ENCODE measurements at regions of chr2 and their contacts with region 1.

Region 1: GRCh38 chr2:96336104-96336775 is 674 bp downstream of the NCAPH start:
- DNase-seq: no peak
- H3K4me3 Mint-ChIP-seq: peak overlapping the region; percentile 81
- H3K27ac Mint-ChIP-seq: peak overlapping the region; percentile 73
- H3K4me1 Mint-ChIP-seq: peaks cover 66% of the 10 kb centered on the region
- H3K27me3 Mint-ChIP-seq: no peaks in the 10 kb centered on the region

Region 2: GRCh38 chr2:96180521-96180920 is 155.7 kb before region 1 on chr2:
- CTCF ChIA-PET with region 1: no interaction called
- POLR2A ChIA-PET with region 1: no interaction called
- DNase-seq: no peak
- H3K4me3 Mint-ChIP-seq: no peak overlapping the region
- H3K27ac Mint-ChIP-seq: no peak overlapping the region
- H3K4me1 Mint-ChIP-seq: peaks cover 7% of the 10 kb centered on the region
- H3K27me3 Mint-ChIP-seq: peaks cover 4% of the 10 kb centered on the region

Region 3: GRCh38 chr2:96315400-96316071 is 20.7 kb before region 1 on chr2:
- CTCF ChIA-PET with region 1: interaction called, 7 read pairs
- POLR2A ChIA-PET with region 1: interaction called, 422 read pairs
- DNase-seq: peak; percentile 61
- H3K4me3 Mint-ChIP-seq: peak overlapping the region; percentile 61
- H3K27ac Mint-ChIP-seq: peak overlapping the region; percentile 93
- H3K4me1 Mint-ChIP-seq: peaks cover 63% of the 10 kb centered on the region
- H3K27me3 Mint-ChIP-seq: no peaks in the 10 kb centered on the region

Region 4: GRCh38 chr2:96320728-96321622 is 15.3 kb before region 1 on chr2:
- CTCF ChIA-PET with region 1: interaction called, 28 read pairs
- POLR2A ChIA-PET with region 1: interaction called, 422 read pairs
- DNase-seq: peak; percentile 46
- H3K4me3 Mint-ChIP-seq: peak overlapping the region; percentile 80
- H3K27ac Mint-ChIP-seq: peak overlapping the region; percentile 84
- H3K4me1 Mint-ChIP-seq: peaks cover 70% of the 10 kb centered on the region
- H3K27me3 Mint-ChIP-seq: no peaks in the 10 kb centered on the region

Measured in activated CD4-positive, alpha-beta memory T cell treated with anti-CD3 and anti-CD28 coated beads, Interleukin-2, amount 10 ng/mL, durations not matched to agents 7 days and 5 days (primary cell).